ENCODE measurements at regions of chr3 and their contacts with region 1.

Region 1: DNA sequence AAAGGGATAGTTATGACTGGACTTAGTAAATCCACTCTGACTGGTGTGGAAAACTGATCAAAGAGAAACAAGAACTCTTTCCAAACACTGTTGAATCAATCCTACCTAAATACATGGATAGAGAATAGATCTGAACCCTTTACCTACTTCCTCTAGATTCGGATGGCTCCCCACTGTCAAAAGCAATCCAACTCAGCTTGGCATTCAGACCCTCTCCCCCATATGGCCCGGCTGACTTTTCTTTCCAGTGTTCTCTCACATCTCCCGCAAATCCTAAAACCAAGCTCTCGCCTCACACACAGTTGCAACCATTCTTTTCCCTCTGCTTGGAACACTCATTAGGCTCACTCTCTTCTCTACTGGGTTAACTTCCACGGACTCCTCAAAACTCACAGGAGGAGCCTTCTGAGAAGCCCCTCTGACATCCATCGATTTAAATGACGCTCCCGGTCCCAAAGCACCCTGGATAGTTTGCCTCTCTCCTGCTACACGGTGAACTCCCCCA is 639 bp downstream of the SPICE1 start:
- DNase-seq: no peak
- H3K4me3 ChIP-seq: peak overlapping the region; percentile 87 to 98
- H3K27ac ChIP-seq: peak overlapping the region; percentile 66 to 88
- H3K4me1 ChIP-seq: peaks cover 0 to 16% (median 10%) of the 10 kb centered on the region in 4 donors
- H3K27me3 ChIP-seq: no peaks in the 10 kb centered on the region
- CTCF ChIP-seq: no peak

Region 2: GRCh38 chr3:113606539-113607218 is 92.4 kb after region 1 on chr3:
- intact Hi-C with region 1: no loop called
- DNase-seq: no peak
- H3K4me3 ChIP-seq: no peak overlapping the region
- H3K27ac ChIP-seq: no peak overlapping the region
- H3K4me1 ChIP-seq: no peaks in the 10 kb centered on the region
- H3K27me3 ChIP-seq: no peaks in the 10 kb centered on the region
- CTCF ChIP-seq: no peak

Region 3: GRCh38 chr3:113696658-113697499 is 182.6 kb after region 1 on chr3:
- intact Hi-C with region 1: loop called (anchors 10 kb)
- DNase-seq: peak; percentile 100
- H3K4me3 ChIP-seq: peak overlapping the region; percentile 100
- H3K27ac ChIP-seq: peak overlapping the region; percentile 99
- H3K4me1 ChIP-seq: peaks cover 0 to 39% (median 17%) of the 10 kb centered on the region in 4 donors
- H3K27me3 ChIP-seq: no peaks in the 10 kb centered on the region
- CTCF ChIP-seq: peak in 1 of 2 experiments; percentile 13